Activated naive CD4-positive, alpha-beta T cell treated with anti-CD3 and anti-CD28 coated beads for 36 hours (primary cell): ENCODE measurements at regions of chr10 and their contacts with region 1.

Region 1: DNA sequence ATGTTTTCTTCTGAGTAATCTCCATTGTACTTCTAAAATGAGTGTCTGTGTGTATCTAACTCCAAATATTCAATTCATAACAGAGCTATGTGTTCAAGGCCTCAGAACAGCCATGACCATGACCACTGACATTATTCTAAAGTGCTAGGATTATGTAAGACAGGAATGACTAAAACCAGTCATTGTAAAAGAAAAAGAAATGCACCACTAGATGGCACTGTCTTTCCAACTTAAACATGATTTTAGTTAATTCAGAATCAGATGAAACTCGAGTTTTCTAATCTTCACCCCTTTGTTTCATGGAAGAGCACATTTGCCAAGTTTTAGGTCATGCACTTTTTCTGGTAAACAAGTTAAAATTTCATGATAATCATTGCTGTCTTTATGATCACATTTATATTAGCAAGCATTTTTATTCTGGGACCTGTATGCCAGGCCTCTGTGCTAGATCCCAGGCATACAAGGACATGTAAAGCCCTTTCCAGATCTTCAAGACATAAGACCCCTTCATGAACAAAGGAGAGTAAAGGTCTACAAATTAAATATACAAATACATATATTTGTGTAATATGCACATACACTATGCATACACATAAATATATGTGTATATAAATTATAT is 26.1 kb upstream of the RSU1 start:
- DNase-seq: no peak
- H3K4me3 Mint-ChIP-seq: no peak overlapping the region
- H3K27ac Mint-ChIP-seq: no peak overlapping the region
- H3K4me1 Mint-ChIP-seq: no peaks in the 10 kb centered on the region
- H3K27me3 Mint-ChIP-seq: no peaks in the 10 kb centered on the region

Region 2: GRCh38 chr10:16828114-16828568 is 15.2 kb before region 1 on chr10:
- CTCF ChIA-PET with region 1: interaction called, 3 read pairs
- intact Hi-C with region 1: loop called (anchors 1 kb)
- DNase-seq: peak; percentile 81
- H3K4me3 Mint-ChIP-seq: no peak overlapping the region
- H3K27ac Mint-ChIP-seq: no peak overlapping the region
- H3K4me1 Mint-ChIP-seq: peaks cover 4% of the 10 kb centered on the region
- H3K27me3 Mint-ChIP-seq: no peaks in the 10 kb centered on the region

Region 3: GRCh38 chr10:17029581-17030271 is 186.4 kb after region 1 on chr10:
- CTCF ChIA-PET with region 1: no interaction called
- intact Hi-C with region 1: loop called (anchors 5 kb)
- DNase-seq: peak; percentile 94
- H3K4me3 Mint-ChIP-seq: peak overlapping the region; percentile 61
- H3K27ac Mint-ChIP-seq: peak overlapping the region; percentile 83
- H3K4me1 Mint-ChIP-seq: peaks cover 69% of the 10 kb centered on the region
- H3K27me3 Mint-ChIP-seq: no peaks in the 10 kb centered on the region

Region 4: DNA sequence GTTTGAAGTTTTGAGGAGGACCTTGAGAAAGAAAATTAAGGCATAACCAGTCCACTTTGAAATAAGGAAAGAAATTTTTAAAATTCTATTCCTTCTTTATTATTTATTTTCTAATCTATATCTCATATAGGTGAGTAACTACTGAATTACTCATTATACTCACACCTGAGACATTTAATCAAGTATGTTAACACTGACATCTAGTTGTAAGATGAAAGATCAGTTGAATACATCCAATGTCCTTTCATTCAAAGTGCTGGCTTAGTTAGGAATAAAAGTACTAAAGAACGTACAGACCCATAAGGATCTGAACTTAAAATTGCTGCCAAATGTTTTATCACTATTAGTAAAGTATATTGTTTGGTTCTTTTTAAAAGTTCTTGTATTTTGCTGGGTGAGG is 334.6 kb after region 1 on chr10:
- CTCF ChIA-PET with region 1: no interaction called
- intact Hi-C with region 1: loop called (anchors 1 kb)
- DNase-seq: no peak
- H3K4me3 Mint-ChIP-seq: no peak overlapping the region
- H3K27ac Mint-ChIP-seq: no peak overlapping the region
- H3K4me1 Mint-ChIP-seq: peaks cover 17% of the 10 kb centered on the region
- H3K27me3 Mint-ChIP-seq: no peaks in the 10 kb centered on the region

Region 5: GRCh38 chr10:17249820-17250219 is 406.5 kb after region 1 on chr10:
- CTCF ChIA-PET with region 1: interaction called, 4 read pairs
- intact Hi-C with region 1: loop called (anchors 1 kb)
- DNase-seq: no peak
- H3K4me3 Mint-ChIP-seq: no peak overlapping the region
- H3K27ac Mint-ChIP-seq: no peak overlapping the region
- H3K4me1 Mint-ChIP-seq: no peaks in the 10 kb centered on the region
- H3K27me3 Mint-ChIP-seq: no peaks in the 10 kb centered on the region

Region 6: DNA sequence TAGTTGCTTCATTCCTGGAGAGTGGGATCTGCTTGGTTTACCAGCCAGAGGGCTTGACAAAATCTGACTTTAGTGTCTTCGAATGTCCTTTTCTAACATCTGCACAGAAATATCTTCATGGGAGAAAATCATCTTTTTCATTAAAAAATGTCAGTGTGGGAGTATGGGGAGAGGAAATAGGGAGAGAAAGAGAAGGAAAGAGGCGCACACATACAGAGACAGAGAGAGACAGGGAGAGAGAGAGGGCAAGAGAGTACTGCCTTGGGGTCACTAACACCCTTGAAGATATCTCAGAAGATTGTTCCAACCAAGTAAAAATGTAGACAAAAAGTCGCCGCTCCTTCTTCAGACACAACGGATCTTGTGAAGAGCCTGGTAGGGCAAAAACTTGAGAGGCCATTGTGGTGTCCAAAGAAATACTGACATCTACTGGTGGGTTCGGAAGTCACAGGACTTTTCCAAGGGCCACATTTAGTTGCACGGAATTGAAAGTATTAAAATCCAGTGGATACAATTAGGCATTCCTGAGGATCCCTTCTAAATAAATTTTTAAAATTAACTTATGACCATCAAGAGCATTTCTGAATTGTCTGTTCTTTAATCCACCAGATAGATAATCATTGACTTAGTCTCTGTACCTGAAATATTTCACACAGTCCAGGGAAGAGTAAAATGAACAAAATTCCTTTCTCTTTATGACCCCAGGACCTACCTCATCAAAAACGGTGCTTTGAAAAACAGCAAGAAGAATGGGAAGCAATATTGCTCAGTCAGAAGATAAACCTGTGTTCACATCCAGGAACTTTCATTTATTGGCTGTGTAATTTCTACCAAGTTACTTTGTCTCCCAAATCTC is 414.3 kb after region 1 on chr10:
- CTCF ChIA-PET with region 1: interaction called, 20 read pairs
- intact Hi-C with region 1: loop called (anchors 1 kb)
- DNase-seq: peak; percentile 67
- H3K4me3 Mint-ChIP-seq: peak overlapping the region; percentile 3
- H3K27ac Mint-ChIP-seq: no peak overlapping the region
- H3K4me1 Mint-ChIP-seq: peaks cover 4% of the 10 kb centered on the region
- H3K27me3 Mint-ChIP-seq: no peaks in the 10 kb centered on the region

Region 7: GRCh38 chr10:17742918-17743317 is 899.6 kb after region 1 on chr10:
- CTCF ChIA-PET with region 1: no interaction called
- intact Hi-C with region 1: loop called (anchors 10 kb)
- DNase-seq: peak; percentile 83
- H3K4me3 Mint-ChIP-seq: no peak overlapping the region
- H3K27ac Mint-ChIP-seq: no peak overlapping the region
- H3K4me1 Mint-ChIP-seq: peaks cover 8% of the 10 kb centered on the region
- H3K27me3 Mint-ChIP-seq: no peaks in the 10 kb centered on the region